Dorsolateral prefrontal cortex (tissue), 120 donors: ENCODE measurements at regions of chr11 and their contacts with region 1.

Region 1: GRCh38 chr11:123478352-123478987 is 48.4 kb downstream of the GRAMD1B start:
- DNase-seq: peak in 8 of 10 donors; percentile 24 to 72 (median 55)
- H3K4me3 ChIP-seq: peak overlapping the region in 1 of 59 donors; percentile 5
- H3K27ac ChIP-seq: no peak overlapping the region
- H3K27me3 ChIP-seq: no peaks in the 10 kb centered on the region
- CTCF ChIP-seq: peak; percentile 67 to 93 (median 80)

Region 2: DNA sequence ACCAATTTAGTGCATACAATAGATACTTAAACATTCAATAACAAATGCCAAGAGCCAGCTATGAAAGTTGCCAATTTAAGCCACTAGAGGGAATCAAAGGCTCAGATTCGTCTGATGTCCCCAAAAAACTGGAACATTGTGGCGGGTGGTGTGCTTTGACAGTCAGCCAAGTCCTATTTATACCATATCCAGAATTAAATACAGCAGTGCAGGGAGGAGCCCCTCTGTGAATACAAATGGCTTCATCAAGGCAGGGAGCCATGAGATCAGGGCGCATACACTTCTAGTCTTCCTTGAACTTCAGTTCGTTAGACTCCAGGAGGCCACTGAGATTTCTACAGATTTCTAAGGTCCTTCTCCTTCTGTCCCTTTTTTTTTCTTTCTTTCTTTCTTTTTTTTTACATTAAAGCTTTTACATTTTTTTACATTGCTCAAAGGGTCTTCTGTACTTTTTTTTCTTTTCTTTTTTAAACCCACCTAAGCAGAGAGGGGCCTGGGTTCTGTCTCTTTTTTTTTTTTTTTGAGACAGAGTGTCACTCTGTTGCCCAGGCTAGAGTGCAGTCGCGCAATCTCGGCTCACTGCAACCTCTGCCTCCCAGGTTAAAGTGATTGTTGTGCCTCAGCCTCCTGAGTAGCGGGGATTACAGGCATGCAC is 375.0 kb before region 1 on chr11:
- intact Hi-C with region 1: loop called in 1 of 2 experiments (anchors 5 kb)
- DNase-seq: peak in 6 of 10 donors; percentile 30 to 86 (median 62)
- H3K4me3 ChIP-seq: peak overlapping the region in 9 of 59 donors; percentile 8 to 30 (median 24)
- H3K27ac ChIP-seq: peak overlapping the region in 17 of 59 donors; percentile 0 to 85 (median 31)
- H3K27me3 ChIP-seq: peaks cover 0 to 4% (median 0%) of the 10 kb centered on the region in 45 donors
- CTCF ChIP-seq: peak; percentile 60 to 86 (median 75)

Region 3: DNA sequence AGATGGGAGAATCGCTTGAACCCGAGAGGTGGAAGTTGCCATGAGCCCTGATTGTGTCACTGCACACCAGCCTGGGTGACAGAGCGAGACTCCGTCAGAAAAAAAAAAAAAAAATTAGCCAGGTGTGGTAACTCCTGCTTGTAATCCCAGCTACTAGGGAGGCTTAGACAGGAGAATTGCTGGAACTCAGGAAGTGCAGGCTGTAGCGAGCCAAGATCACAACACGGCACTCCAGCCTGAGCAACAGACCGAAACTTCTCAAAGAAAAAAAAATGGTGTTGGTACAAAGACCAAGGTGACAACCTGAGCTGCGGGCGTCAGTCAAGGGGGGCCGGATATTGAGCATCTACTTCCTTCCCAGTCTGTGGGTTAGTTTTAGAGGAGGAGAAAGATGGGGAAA is 368.1 kb before region 1 on chr11:
- intact Hi-C with region 1: loop called in 1 of 2 experiments (anchors 2 kb)
- DNase-seq: no peak
- H3K4me3 ChIP-seq: no peak overlapping the region
- H3K27ac ChIP-seq: no peak overlapping the region
- H3K27me3 ChIP-seq: peaks cover 0 to 8% (median 0%) of the 10 kb centered on the region in 45 donors
- CTCF ChIP-seq: no peak

Region 4: GRCh38 chr11:123301696-123302400 is 176.6 kb before region 1 on chr11:
- intact Hi-C with region 1: loop called (anchors 1 to 2 kb)
- DNase-seq: peak; percentile 25 to 82 (median 49)
- H3K4me3 ChIP-seq: peak overlapping the region; percentile 7 to 77 (median 59)
- H3K27ac ChIP-seq: peak overlapping the region in 2 of 59 donors; percentile 39 to 46
- H3K27me3 ChIP-seq: peaks cover 0 to 42% (median 6%) of the 10 kb centered on the region in 45 donors
- CTCF ChIP-seq: peak; percentile 54 to 98 (median 90)

Region 5: DNA sequence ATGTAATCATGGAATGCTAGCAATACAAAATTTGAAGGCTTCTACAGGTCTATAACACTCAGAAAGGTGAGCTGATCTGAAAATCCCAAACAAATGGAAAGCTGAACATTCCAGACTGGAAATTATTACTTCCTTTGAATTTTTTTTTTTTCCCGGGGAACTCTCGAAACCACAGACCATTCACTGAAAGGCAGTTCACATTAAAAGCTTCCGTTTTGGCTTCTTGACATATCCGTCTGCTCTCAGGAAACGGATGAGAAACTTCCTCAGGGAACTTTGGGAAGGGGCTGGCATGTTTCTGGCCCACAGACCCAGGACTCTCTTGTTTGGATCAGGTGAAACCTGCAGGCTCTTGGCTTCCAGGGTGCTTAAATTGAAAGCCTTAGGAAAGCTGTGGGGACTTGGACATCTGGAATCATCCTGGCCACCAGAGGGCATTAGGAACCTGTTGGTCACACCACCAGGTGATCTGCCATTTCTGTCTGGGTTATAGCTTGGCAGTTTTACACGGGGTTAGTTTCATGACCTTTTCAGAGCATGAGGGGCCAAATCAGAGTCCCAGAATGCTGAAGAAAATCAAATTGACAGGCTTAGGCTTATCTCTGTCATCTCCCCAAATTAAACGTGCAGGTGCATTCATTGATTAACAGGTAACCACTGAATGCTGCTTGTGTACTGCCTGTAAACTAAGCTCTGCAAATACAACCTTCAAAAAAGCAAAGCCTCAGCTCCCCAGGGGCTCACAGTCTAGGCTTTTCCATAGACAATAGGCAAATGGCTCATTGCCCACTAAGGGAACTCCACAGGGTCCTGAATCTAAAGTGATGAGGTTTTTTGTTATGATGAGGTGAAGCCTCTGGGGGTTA is 71.1 kb before region 1 on chr11:
- intact Hi-C with region 1: loop called in 1 of 2 experiments (anchors 5 kb)
- DNase-seq: peak in 4 of 10 donors; percentile 26 to 62 (median 30)
- H3K4me3 ChIP-seq: peak overlapping the region in 1 of 59 donors; percentile 10
- H3K27ac ChIP-seq: no peak overlapping the region
- H3K27me3 ChIP-seq: peaks cover 0 to 13% (median 0%) of the 10 kb centered on the region in 45 donors
- CTCF ChIP-seq: peak in 53 of 56 donors; percentile 14 to 70 (median 48)

Region 6: GRCh38 chr11:123640677-123641494 is 162.4 kb after region 1 on chr11:
- intact Hi-C with region 1: no loop called
- DNase-seq: peak in 8 of 10 donors; percentile 33 to 72 (median 60)
- H3K4me3 ChIP-seq: peak overlapping the region in 5 of 59 donors; percentile 2 to 33 (median 12)
- H3K27ac ChIP-seq: peak overlapping the region in 8 of 59 donors; percentile 0 to 48 (median 26)
- H3K27me3 ChIP-seq: peaks cover 0 to 7% (median 0%) of the 10 kb centered on the region in 45 donors
- CTCF ChIP-seq: peak; percentile 48 to 81 (median 72)